ENCODE measurements at regions of chr9 and their contacts with region 1.

Region 1: DNA sequence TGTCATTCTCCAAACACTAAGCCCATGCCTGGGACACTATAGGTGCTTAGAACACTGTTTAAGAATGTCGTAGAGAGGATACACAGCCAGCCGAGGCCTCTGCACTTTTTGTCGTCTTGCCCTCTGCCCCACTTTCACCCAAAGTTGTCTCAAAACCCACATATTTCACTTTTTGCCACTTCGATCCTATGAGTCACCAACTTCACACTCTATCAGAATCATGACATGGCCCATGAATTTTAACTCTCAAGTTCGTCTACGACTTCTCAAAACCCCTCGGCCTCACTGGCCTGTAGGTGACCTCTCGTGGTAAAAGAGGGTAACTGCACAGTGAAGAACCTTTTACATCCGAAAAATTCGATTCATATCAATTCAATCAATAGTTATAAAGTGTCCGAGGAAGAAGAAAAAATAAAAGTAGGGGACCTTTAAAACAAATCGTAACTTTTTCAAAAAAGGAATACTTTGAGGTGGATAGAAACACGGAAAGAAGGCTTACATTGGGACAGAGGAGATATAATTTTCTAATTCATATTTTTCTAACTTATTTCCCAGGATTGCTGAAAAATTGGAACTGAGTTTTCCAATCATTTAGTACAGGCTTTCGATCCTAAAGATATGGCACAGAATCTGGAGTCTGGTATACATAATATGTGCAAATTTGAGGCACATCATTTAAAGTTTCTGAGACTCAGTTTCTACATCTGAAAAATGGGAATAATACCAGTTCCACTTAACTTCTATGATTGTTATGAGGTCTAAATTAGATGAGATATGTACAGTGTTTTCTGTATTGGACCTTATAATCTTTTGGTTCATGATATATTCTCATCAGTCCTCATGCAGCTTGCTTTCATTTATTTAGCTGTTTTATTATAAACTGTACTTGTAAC is 122.6 kb downstream of the APBA1 start:
- DNase-seq: peak; percentile 42
- ATAC-seq: no peak
- H3K4me3 Mint-ChIP-seq: no peak overlapping the region
- H3K27ac Mint-ChIP-seq: no peak overlapping the region
- H3K4me1 Mint-ChIP-seq: no peaks in the 10 kb centered on the region
- H3K27me3 Mint-ChIP-seq: peaks cover 6% of the 10 kb centered on the region

Region 2: GRCh38 chr9:69421908-69422801 is 127.4 kb before region 1 on chr9:
- CTCF ChIA-PET with region 1: interaction called, 12 read pairs
- POLR2A ChIA-PET with region 1: no interaction called
- DNase-seq: peak; percentile 50
- ATAC-seq: peak; percentile 60
- H3K4me3 Mint-ChIP-seq: no peak overlapping the region
- H3K27ac Mint-ChIP-seq: no peak overlapping the region
- H3K4me1 Mint-ChIP-seq: no peaks in the 10 kb centered on the region
- H3K27me3 Mint-ChIP-seq: no peaks in the 10 kb centered on the region

Measured in activated CD8-positive, alpha-beta T cell treated with anti-CD3 and anti-CD28 coated beads, Interleukin-2, amount 10 ng/mL, durations not matched to agents 7 days and 5 days (primary cell).